Activated naive CD4-positive, alpha-beta T cell treated with anti-CD3 and anti-CD28 coated beads for 36 hours (primary cell): ENCODE measurements at regions of chr3 and their contacts with region 1.

Region 1: DNA sequence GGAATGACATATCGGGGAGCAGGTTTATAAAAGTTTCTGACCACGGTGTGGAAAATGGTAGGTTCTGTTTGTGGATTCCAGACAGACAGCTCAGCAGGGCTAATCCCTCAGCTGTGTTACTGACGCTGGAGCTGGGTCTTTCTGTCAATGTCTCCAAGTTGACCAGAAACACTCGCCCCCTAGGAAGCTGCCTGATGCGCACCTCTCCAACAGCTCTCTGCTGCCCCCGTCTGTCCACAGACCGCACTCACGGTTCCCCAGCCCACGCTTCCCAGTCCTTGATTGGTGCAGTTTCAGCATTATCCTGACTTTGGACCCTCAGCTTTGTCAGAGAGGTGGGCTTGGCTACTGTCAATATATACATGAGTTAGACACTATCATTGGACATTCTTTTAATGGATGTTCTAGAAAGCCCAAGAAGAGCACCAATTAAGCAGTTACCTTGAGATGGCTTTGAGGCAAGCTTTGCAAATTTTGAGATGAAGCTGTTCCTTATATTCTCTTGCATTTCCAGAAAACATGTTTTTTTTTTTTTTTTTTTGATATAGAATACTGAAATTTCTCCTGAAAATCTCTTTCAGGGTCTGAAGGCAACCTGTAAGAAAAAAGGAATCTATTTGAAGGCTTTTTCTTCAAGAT is 98.9 kb upstream of the TBC1D5 start:
- DNase-seq: peak; percentile 84
- H3K4me3 Mint-ChIP-seq: no peak overlapping the region
- H3K27ac Mint-ChIP-seq: no peak overlapping the region
- H3K4me1 Mint-ChIP-seq: no peaks in the 10 kb centered on the region
- H3K27me3 Mint-ChIP-seq: no peaks in the 10 kb centered on the region

Region 2: GRCh38 chr3:16932877-16933276 is 908.4 kb before region 1 on chr3:
- CTCF ChIA-PET with region 1: no interaction called
- intact Hi-C with region 1: no loop called
- DNase-seq: no peak
- H3K4me3 Mint-ChIP-seq: peak overlapping the region; percentile 69
- H3K27ac Mint-ChIP-seq: peak overlapping the region; percentile 16
- H3K4me1 Mint-ChIP-seq: peaks cover 92% of the 10 kb centered on the region
- H3K27me3 Mint-ChIP-seq: no peaks in the 10 kb centered on the region

Region 3: GRCh38 chr3:17258823-17259436 is 582.4 kb before region 1 on chr3:
- CTCF ChIA-PET with region 1: interaction called, 6 read pairs
- intact Hi-C with region 1: loop called (anchors 1 kb)
- DNase-seq: peak; percentile 19
- H3K4me3 Mint-ChIP-seq: no peak overlapping the region
- H3K27ac Mint-ChIP-seq: no peak overlapping the region
- H3K4me1 Mint-ChIP-seq: no peaks in the 10 kb centered on the region
- H3K27me3 Mint-ChIP-seq: no peaks in the 10 kb centered on the region

Region 4: DNA sequence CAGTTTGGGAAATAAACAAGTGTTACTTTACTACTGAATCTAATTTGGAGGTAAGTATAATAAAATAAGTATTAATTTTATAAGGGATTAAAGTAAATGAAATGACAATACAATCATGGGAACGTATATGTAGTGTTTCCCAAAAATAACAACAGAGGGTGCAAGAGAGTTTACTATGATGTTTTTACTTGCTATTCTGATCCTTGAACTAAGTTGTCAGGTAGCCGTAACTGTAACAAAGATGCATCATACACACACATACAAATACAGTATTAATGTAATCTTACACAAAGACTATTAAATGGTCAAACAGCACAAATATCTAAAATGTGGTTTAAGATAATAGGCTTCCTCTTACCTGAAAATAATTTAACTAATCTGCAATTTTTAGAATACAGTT is 410.3 kb before region 1 on chr3:
- CTCF ChIA-PET with region 1: interaction called, 19 read pairs
- intact Hi-C with region 1: loop called (anchors 1 kb)
- DNase-seq: no peak
- H3K4me3 Mint-ChIP-seq: no peak overlapping the region
- H3K27ac Mint-ChIP-seq: no peak overlapping the region
- H3K4me1 Mint-ChIP-seq: no peaks in the 10 kb centered on the region
- H3K27me3 Mint-ChIP-seq: no peaks in the 10 kb centered on the region

Region 5: GRCh38 chr3:17645072-17645698 is 196.1 kb before region 1 on chr3:
- CTCF ChIA-PET with region 1: interaction called, 12 read pairs
- intact Hi-C with region 1: loop called (anchors 1 kb)
- DNase-seq: no peak
- H3K4me3 Mint-ChIP-seq: no peak overlapping the region
- H3K27ac Mint-ChIP-seq: no peak overlapping the region
- H3K4me1 Mint-ChIP-seq: peaks cover 8% of the 10 kb centered on the region
- H3K27me3 Mint-ChIP-seq: no peaks in the 10 kb centered on the region

Region 6: GRCh38 chr3:17802821-17803392 is 38.4 kb before region 1 on chr3:
- CTCF ChIA-PET with region 1: interaction called, 10 read pairs
- intact Hi-C with region 1: no loop called
- DNase-seq: no peak
- H3K4me3 Mint-ChIP-seq: no peak overlapping the region
- H3K27ac Mint-ChIP-seq: no peak overlapping the region
- H3K4me1 Mint-ChIP-seq: peaks cover 8% of the 10 kb centered on the region
- H3K27me3 Mint-ChIP-seq: no peaks in the 10 kb centered on the region